K562 (cell line): ENCODE measurements at regions of chr3 and their contacts with region 1.

Region 1: GRCh38 chr3:49539659-49540560 is 14.4 kb upstream of the BSN start:
- DNase-seq: peak; percentile 91 to 93 (median 92)
- ATAC-seq: peak; percentile 100
- H3K4me3 ChIP-seq: peak overlapping the region; percentile 45
- H3K27ac ChIP-seq: peak overlapping the region; percentile 40; the same call in 2 of the 3 replicates
- H3K4me1 ChIP-seq: peaks cover 2 to 11% of the 10 kb centered on the region in 2 experiments; a peak in 3 of 5 replicates
- H3K27me3 ChIP-seq: peaks cover 5 to 8% of the 10 kb centered on the region in 2 experiments; a peak in 3 of 5 replicates
- CTCF ChIP-seq: peak; percentile 66 to 85 (median 81)
- EP300 ChIP-seq: no peak
- POLR2A ChIP-seq: peak; percentile 35; the same call in 1 of the 2 replicates
- RAD21 ChIP-seq: peak; percentile 85 to 90

Region 2: GRCh38 chr3:49165771-49166751 is 373.8 kb before region 1 on chr3 and contains the start of gene CCDC71:
- CTCF ChIA-PET with region 1: no interaction called
- POLR2A ChIA-PET with region 1: no interaction called
- in situ Hi-C with region 1: no loop called
- intact Hi-C with region 1: no loop called
- DNase-seq: peak; percentile 81 to 90 (median 85)
- ATAC-seq: peak; percentile 87
- H3K4me3 ChIP-seq: peak within 1 kb of the TSS; percentile 82
- H3K27ac ChIP-seq: peak within 1 kb of the TSS; percentile 82
- H3K4me1 ChIP-seq: peaks cover 18 to 34% of the 10 kb centered on the region in 2 experiments; a peak in 4 of 5 replicates
- H3K27me3 ChIP-seq: no peaks in the 10 kb centered on the region
- CTCF ChIP-seq: no peak
- EP300 ChIP-seq: no peak
- POLR2A ChIP-seq: peak; percentile 53; the same call in 1 of the 2 replicates
- RAD21 ChIP-seq: no peak
- polyA plus RNA-seq, gene CCDC71: 0.13 to 0.31 TPM

Region 3: DNA sequence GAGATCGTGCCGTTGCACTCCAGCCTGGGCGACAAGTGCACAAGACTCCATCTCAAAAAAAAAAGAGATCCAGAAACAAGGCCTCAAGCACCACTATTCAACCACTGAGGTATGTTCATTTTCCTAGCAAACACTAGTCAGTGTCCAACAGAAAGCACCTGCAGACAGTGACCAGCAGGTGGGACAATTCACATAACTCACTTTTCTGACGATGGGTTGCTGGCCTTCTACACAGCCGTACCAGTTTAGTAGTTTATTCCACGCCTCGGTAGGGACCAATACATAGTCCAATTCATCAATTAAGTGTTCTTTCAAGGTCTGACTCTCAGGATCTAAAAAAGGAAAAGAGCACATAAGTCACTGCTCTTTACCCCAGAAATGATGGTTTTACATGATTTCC is 212.4 kb before region 1 on chr3:
- CTCF ChIA-PET with region 1: no interaction called
- POLR2A ChIA-PET with region 1: no interaction called
- in situ Hi-C with region 1: no loop called
- intact Hi-C with region 1: no loop called
- DNase-seq: peak in 1 of 4 experiments; percentile 14
- ATAC-seq: 0 out of 3 replicates have a peak, but pooled peaks have one; percentile 34
- H3K4me3 ChIP-seq: no peak overlapping the region
- H3K27ac ChIP-seq: no peak overlapping the region
- H3K4me1 ChIP-seq: no peaks in the 10 kb centered on the region
- H3K27me3 ChIP-seq: no peaks in the 10 kb centered on the region
- CTCF ChIP-seq: peak in 2 of 3 experiments; percentile 11 to 23; a peak in 2 of 6 replicates
- EP300 ChIP-seq: no peak
- POLR2A ChIP-seq: no peak
- RAD21 ChIP-seq: no peak

Region 4: GRCh38 chr3:49484471-49484870 is 55.4 kb before region 1 on chr3:
- CTCF ChIA-PET with region 1: no interaction called
- POLR2A ChIA-PET with region 1: no interaction called
- in situ Hi-C with region 1: no loop called
- intact Hi-C with region 1: no loop called
- DNase-seq: no peak
- ATAC-seq: no peak
- H3K4me3 ChIP-seq: no peak overlapping the region
- H3K27ac ChIP-seq: no peak overlapping the region
- H3K4me1 ChIP-seq: no peaks in the 10 kb centered on the region
- H3K27me3 ChIP-seq: no peaks in the 10 kb centered on the region
- CTCF ChIP-seq: no peak
- EP300 ChIP-seq: no peak
- POLR2A ChIP-seq: no peak
- RAD21 ChIP-seq: no peak

Region 5: DNA sequence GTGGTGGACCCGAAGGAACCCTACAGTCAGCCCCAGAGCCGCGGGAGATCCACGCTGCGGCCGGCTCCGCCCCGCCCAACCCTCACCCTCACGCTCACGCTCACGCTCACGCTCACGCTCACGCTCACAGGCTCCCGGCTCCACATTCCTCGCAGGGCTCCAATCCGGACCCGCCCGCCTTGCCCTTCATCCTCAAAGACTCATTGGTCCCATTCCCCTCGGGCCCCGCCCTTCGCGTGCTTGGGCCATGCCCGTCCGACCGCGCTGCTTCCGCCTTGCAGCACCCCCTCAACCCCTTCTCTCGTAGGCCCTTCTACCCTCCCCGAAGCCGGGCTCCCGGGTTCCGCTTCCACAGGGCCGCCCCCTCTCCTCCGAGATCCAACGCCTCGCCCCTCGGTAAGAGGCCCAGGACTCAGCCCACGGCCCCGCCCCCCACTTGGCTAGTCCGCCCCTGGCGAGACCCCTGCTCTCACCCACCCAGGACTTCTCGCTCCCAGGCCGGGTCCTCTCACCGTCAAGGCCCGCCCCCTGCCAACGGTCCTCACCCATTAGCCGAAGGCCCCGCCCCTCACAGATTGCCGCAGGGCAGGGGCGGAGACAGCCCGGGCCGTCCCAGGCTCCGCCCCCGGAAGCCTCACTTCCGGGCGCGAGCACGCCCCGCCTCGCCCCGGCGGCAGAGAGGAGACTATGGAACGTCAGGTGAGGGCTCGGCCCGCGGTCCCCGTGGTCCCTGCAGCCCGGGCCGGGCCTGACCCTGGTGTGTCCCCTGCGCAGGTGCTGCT is 134.0 kb after region 1 on chr3 and contains the start of gene APEH:
- CTCF ChIA-PET with region 1: interaction called, 21 read pairs
- POLR2A ChIA-PET with region 1: interaction called, 5 read pairs
- in situ Hi-C with region 1: loop called (anchors 5 kb)
- intact Hi-C with region 1: loop called (anchors 1 kb)
- DNase-seq: peak; percentile 91 to 96 (median 94)
- ATAC-seq: peak; percentile 90
- H3K4me3 ChIP-seq: peak within 1 kb of the TSS; percentile 81
- H3K27ac ChIP-seq: peak within 1 kb of the TSS; percentile 94
- H3K4me1 ChIP-seq: peaks cover 17 to 38% of the 10 kb centered on the region in 2 experiments; a peak in 4 of 5 replicates
- H3K27me3 ChIP-seq: no peaks in the 10 kb centered on the region
- CTCF ChIP-seq: no peak
- EP300 ChIP-seq: no peak; the same call in 1 of the 2 replicates
- POLR2A ChIP-seq: peak; percentile 80
- RAD21 ChIP-seq: no peak
- polyA plus RNA-seq, gene APEH: 70.9 to 72.6 TPM

Region 6: DNA sequence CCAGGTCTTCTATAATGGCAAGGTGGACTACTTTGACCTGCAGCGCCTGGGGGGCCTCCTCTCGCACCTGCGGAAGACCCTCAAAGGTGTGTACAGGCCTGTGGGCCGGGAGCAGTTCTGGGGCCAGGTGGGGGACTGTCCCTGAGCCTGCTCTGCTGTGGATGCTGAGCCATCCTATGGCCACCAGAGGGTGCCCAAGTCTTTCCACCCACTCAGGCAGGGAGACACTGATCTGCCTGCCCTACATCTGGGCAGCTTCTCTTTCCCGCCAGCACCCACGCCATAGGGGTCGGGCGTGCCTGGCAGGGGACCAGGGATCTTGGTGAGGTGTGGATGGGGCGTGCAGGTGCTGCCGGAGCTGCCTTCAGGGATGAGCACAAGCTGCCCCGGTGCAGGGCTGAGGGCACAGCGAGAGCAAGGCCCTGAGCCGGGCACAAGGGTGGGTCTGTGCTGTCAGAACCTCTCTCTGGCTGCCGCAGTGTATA is 163.6 kb after region 1 on chr3:
- CTCF ChIA-PET with region 1: no interaction called
- POLR2A ChIA-PET with region 1: interaction called, 4 read pairs
- in situ Hi-C with region 1: no loop called
- intact Hi-C with region 1: loop called (anchors 1 kb)
- DNase-seq: peak; percentile 60 to 71 (median 64)
- ATAC-seq: peak; percentile 95
- H3K4me3 ChIP-seq: no peak overlapping the region
- H3K27ac ChIP-seq: no peak overlapping the region
- H3K4me1 ChIP-seq: peaks cover 0 to 10% of the 10 kb centered on the region in 2 experiments; a peak in 2 of 5 replicates
- H3K27me3 ChIP-seq: no peaks in the 10 kb centered on the region
- CTCF ChIP-seq: peak; percentile 71 to 76 (median 72)
- EP300 ChIP-seq: no peak
- POLR2A ChIP-seq: no peak
- RAD21 ChIP-seq: peak; percentile 60 to 69

Region 7: GRCh38 chr3:49775538-49775937 is 235.6 kb after region 1 on chr3:
- CTCF ChIA-PET with region 1: no interaction called
- POLR2A ChIA-PET with region 1: no interaction called
- in situ Hi-C with region 1: no loop called
- intact Hi-C with region 1: no loop called
- DNase-seq: no peak
- ATAC-seq: no peak
- H3K4me3 ChIP-seq: no peak overlapping the region
- H3K27ac ChIP-seq: no peak overlapping the region
- H3K4me1 ChIP-seq: no peaks in the 10 kb centered on the region; a peak in 2 of 5 replicates
- H3K27me3 ChIP-seq: no peaks in the 10 kb centered on the region
- CTCF ChIP-seq: no peak
- EP300 ChIP-seq: no peak
- POLR2A ChIP-seq: no peak
- RAD21 ChIP-seq: no peak